ENCODE measurements at regions of chr11 and their contacts with region 1.

Region 1: GRCh38 chr11:126440792-126441514 is 85.5 kb downstream of the ST3GAL4 start:
- DNase-seq: peak; percentile 93
- H3K4me3 Mint-ChIP-seq: no peak overlapping the region
- H3K27ac Mint-ChIP-seq: no peak overlapping the region
- H3K4me1 Mint-ChIP-seq: peaks cover 3% of the 10 kb centered on the region
- H3K27me3 Mint-ChIP-seq: peaks cover 6% of the 10 kb centered on the region

Region 2: DNA sequence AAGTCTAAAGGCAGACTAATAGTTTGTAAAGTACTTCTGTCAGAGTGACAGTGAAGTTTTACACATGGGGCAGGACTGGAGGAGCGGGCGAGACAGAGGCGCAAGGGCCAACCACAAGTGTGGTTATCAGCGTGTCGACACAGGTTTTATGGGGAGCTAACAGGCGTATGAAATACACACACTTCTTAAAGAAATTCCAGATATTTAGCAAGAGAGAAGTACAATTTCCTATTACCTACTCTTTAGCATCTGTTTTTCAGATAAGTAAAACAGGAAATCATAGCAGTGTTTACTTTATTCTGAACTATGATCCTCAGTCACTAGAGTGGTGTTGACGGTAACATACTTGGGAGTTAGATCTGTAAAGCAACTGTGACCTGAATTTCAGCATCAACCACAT is 472.6 kb before region 1 on chr11:
- intact Hi-C with region 1: no loop called
- DNase-seq: no peak
- H3K4me3 Mint-ChIP-seq: no peak overlapping the region
- H3K27ac Mint-ChIP-seq: no peak overlapping the region
- H3K4me1 Mint-ChIP-seq: no peaks in the 10 kb centered on the region
- H3K27me3 Mint-ChIP-seq: peaks cover 4% of the 10 kb centered on the region

Region 3: DNA sequence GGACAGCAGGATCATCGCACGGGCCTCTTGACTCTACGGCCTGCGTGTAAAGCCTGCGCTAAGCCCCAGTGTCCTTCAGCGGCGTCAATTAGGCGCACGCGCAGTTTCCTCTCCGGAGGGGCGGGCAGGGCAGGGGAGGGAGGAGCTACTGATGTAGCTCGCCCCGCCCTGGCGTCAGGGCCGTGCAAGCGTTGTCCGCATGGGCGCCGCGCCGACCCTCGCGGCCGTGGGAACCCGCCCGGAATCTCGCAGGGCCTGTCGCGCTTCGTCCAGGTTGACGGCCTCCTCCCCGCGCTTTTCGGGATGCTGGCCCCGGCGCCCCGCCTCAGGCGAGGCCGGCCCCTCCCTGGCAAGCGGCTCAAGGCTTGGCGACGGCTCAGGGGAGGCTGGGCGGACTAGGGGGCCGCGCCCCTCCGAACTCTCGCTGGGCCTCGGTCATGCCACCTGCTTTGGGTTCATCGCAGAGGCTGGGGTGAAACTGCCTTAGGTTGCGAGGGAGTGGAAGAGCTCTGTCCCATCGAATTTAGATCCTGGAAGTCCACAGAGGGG is 24.3 kb before region 1 on chr11:
- intact Hi-C with region 1: no loop called
- DNase-seq: peak; percentile 90
- H3K4me3 Mint-ChIP-seq: peak overlapping the region; percentile 70
- H3K27ac Mint-ChIP-seq: peak overlapping the region; percentile 64
- H3K4me1 Mint-ChIP-seq: peaks cover 17% of the 10 kb centered on the region
- H3K27me3 Mint-ChIP-seq: peaks cover 10% of the 10 kb centered on the region

Region 4: DNA sequence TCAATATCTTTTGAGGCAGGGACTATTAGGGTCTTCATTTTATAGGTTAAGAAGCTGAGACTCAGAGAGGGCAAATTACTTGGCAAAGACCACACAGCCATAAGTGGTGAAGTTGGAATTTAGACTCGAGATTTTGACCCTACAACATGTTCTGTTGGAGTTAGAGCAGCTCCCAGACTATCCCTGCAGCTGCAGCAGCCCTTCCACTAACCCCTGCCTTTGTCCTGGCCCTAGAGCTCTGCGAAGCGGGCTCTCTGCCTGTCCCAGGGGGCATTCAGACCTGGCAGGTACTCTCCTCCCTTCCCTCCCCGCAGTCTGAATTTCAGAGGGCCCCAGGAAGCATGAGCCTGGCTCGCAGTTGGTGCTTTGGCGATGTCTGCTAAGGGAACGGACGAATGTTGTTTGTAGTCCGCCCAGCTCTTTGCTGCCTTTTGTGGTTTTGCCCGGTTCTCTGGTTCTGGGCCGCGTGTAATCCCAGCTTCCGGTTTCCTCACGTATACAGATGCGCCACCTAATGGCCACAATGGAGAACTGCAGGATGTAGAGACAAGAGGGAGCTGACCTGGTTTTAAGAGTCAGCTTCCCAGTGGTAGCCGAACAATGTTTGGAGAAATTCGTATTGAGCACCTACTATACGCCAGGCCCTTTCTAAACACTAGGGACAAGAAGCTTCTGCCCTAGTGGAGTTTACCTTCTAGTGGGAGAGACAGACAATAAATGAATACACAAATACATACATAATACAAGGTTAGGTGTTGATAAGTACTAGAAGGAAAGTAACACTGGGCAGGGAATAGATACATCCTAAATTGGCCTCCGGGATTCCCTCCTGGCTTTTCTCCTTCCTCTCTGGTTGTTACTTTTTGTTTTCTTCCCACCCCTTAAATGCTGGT is 39.7 kb after region 1 on chr11:
- intact Hi-C with region 1: loop called (anchors 1 kb)
- DNase-seq: peak; percentile 92
- H3K4me3 Mint-ChIP-seq: peak overlapping the region; percentile 60
- H3K27ac Mint-ChIP-seq: peak overlapping the region; percentile 86
- H3K4me1 Mint-ChIP-seq: peaks cover 16% of the 10 kb centered on the region
- H3K27me3 Mint-ChIP-seq: no peaks in the 10 kb centered on the region

Region 5: DNA sequence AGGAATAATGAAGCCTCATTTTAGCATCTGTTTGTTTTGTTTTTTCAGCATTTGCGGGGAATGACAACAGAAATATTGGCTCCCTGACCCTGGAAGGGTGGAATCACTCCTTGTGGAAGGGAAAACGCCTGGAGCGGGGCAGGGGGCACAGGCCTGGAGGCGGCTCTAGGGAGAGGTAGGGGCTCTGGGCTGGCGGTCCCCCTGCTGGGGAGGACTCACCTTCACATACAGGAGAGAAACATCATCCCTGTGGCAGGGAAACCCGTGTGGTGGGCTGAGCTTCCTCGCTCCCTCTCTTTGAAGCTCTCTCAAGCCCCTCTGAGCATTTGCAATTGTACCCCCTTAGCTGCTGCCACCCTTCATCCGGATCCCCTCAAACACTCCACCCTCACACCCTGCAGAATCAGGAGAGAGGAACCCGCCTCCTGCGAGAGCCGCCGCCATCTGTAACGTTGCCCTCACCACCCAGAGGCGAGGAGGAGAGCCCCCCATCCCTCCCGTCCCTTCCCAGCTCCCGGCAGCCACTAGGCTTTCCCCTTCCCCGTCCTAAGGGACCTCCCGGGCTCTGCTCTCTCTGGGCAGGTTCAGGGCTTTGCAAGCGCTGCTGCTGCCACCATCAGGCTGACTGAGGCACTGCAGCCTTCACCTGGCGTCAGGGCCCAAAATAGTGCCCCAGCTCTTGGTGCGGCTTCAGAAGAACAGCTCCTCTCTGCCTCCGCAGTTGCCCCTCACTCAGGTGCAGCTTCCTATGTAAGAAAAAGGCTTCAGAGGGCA is 549.2 kb after region 1 on chr11:
- intact Hi-C with region 1: loop called (anchors 1 kb)
- DNase-seq: peak; percentile 87
- H3K4me3 Mint-ChIP-seq: no peak overlapping the region
- H3K27ac Mint-ChIP-seq: no peak overlapping the region
- H3K4me1 Mint-ChIP-seq: no peaks in the 10 kb centered on the region
- H3K27me3 Mint-ChIP-seq: peaks cover 4% of the 10 kb centered on the region

Measured in activated CD4-positive, alpha-beta T cell treated with anti-CD3 and anti-CD28 coated beads, Interleukin-2, amount 10 ng/mL, durations not matched to agents 24 days and 14 days (primary cell).